Endothelial cell of umbilical vein (primary cell): ENCODE measurements at regions of chr6 and their contacts with region 1.

Region 1: GRCh38 chr6:722077-722524 is 29.2 kb upstream of the EXOC2 start:
- DNase-seq: peak; percentile 77
- H3K4me3 ChIP-seq: no peak overlapping the region
- H3K27ac ChIP-seq: no peak overlapping the region
- H3K4me1 ChIP-seq: no peaks in the 10 kb centered on the region
- H3K27me3 ChIP-seq: no peaks in the 10 kb centered on the region
- CTCF ChIP-seq: peak; percentile 89 to 94
- POLR2A ChIP-seq: no peak

Region 2: DNA sequence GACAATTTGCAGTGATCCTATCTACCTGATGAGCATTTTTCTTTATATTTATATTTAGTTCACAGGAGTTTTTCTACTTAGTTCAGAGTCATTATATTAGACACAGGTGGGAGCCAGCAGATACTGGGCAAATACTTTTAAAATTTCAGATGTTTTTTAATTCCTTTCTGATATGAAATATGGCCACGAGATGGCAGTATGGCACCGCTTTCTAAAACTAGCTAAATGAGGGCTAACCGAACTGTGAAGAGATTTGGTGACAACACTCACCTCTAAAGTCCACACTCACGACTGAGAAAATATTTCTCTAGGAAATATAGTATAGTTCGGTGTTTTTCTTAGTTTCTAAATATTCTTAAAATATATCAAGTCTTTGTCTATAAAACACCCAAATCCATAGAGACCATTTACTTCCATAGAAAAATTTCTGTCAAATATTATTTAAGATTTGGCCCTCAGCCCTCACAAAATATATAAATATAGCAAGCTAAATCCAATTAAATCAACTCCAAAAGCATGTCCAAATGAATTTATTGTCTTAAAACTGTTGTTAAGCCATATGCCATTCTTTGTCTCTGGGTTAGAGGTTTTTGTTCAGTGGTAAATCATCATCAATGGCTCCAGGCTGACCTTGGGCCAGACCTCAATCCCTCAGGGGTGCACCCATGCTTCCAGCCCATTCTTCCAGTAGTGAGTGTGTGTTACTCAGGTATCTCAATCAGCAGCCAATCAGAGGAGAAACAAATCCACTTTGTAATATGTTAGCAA is 128.8 kb before region 1 on chr6:
- CTCF ChIA-PET with region 1: interaction called, 66 read pairs
- POLR2A ChIA-PET with region 1: no interaction called
- dilution Hi-C with region 1: no loop called
- intact Hi-C with region 1: loop called (anchors 1 kb)
- DNase-seq: peak; percentile 67
- H3K4me3 ChIP-seq: no peak overlapping the region
- H3K27ac ChIP-seq: no peak overlapping the region
- H3K4me1 ChIP-seq: no peaks in the 10 kb centered on the region
- H3K27me3 ChIP-seq: no peaks in the 10 kb centered on the region
- CTCF ChIP-seq: peak; percentile 15 to 27
- POLR2A ChIP-seq: no peak

Region 3: DNA sequence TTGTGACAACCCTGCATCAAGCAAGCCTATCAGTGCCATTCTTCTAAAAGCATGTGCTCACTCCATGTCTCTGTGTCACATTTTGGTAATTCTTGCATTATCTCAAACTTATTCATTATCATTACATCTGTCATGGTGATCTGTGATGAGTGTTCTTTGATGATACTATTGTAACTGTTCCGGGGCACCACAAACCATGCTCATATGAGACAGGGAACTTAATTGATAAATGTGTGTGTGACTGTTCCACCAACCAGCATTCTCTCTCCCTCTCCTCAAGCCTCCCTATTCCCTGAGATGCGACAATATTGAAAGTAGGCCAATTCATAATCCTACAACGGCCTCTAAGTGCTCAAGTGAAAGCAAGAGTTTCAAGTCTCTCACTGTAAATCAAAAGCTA is 69.2 kb before region 1 on chr6:
- CTCF ChIA-PET with region 1: interaction called, 11 read pairs
- POLR2A ChIA-PET with region 1: no interaction called
- dilution Hi-C with region 1: no loop called
- intact Hi-C with region 1: no loop called
- DNase-seq: no peak
- H3K4me3 ChIP-seq: no peak overlapping the region
- H3K27ac ChIP-seq: no peak overlapping the region
- H3K4me1 ChIP-seq: no peaks in the 10 kb centered on the region
- H3K27me3 ChIP-seq: no peaks in the 10 kb centered on the region
- CTCF ChIP-seq: no peak
- POLR2A ChIP-seq: no peak

Region 4: GRCh38 chr6:701700-702479 is 20.2 kb before region 1 on chr6:
- CTCF ChIA-PET with region 1: interaction called, 22 read pairs
- POLR2A ChIA-PET with region 1: no interaction called
- dilution Hi-C with region 1: no loop called
- intact Hi-C with region 1: loop called (anchors 2 kb)
- DNase-seq: no peak
- H3K4me3 ChIP-seq: no peak overlapping the region
- H3K27ac ChIP-seq: no peak overlapping the region
- H3K4me1 ChIP-seq: peaks cover 44% of the 10 kb centered on the region
- H3K27me3 ChIP-seq: no peaks in the 10 kb centered on the region
- CTCF ChIP-seq: no peak
- POLR2A ChIP-seq: no peak

Region 5: DNA sequence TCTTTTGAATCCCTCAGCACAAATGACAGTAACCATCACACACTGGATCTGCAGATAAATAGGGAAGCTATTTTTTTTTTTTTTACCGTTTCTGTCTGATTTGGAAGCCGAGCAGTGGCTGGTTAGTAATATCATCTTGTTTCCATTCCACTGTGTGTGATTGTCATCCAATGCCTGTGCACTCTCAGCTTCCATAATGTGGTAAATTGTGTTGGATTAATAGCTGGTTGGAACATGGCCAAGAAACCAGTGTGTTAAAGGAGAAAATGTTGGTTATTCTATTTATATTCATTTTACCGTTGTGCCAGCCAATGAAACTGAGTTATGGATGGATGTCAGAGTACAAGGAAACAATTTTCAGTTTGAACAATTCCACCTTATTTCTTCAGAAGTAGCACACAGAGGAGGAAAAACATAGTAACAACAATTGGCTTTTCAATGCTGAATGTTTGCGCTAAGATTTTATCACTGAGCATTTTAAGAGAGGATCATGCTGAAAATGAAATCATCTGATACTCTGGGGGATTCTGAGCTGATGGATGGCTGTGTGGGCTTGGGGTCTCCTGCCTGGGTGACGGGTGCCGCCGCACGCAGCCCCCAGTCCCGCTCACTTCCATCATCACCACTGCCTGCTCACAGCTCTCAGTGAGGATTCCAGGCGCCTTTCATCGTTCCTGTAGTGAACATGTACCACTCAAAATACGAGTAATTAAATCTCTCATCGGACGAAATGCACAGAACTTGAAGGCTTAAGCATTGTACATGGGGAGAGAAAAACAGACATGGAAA is 11.5 kb after region 1 on chr6:
- CTCF ChIA-PET with region 1: interaction called, 27 read pairs
- POLR2A ChIA-PET with region 1: no interaction called
- dilution Hi-C with region 1: no loop called
- intact Hi-C with region 1: no loop called
- DNase-seq: no peak
- H3K4me3 ChIP-seq: no peak overlapping the region
- H3K27ac ChIP-seq: no peak overlapping the region
- H3K4me1 ChIP-seq: no peaks in the 10 kb centered on the region
- H3K27me3 ChIP-seq: peaks cover 3 to 7% of the 10 kb centered on the region in 2 experiments
- CTCF ChIP-seq: no peak
- POLR2A ChIP-seq: no peak

Region 6: GRCh38 chr6:1309366-1309765 is 587.3 kb after region 1 on chr6:
- CTCF ChIA-PET with region 1: no interaction called
- POLR2A ChIA-PET with region 1: no interaction called
- dilution Hi-C with region 1: no loop called
- intact Hi-C with region 1: no loop called
- DNase-seq: no peak
- H3K4me3 ChIP-seq: no peak overlapping the region
- H3K27ac ChIP-seq: no peak overlapping the region
- H3K4me1 ChIP-seq: peaks cover 5% of the 10 kb centered on the region
- H3K27me3 ChIP-seq: peaks cover 33 to 56% of the 10 kb centered on the region in 2 experiments
- CTCF ChIP-seq: no peak
- POLR2A ChIP-seq: no peak

Region 7: DNA sequence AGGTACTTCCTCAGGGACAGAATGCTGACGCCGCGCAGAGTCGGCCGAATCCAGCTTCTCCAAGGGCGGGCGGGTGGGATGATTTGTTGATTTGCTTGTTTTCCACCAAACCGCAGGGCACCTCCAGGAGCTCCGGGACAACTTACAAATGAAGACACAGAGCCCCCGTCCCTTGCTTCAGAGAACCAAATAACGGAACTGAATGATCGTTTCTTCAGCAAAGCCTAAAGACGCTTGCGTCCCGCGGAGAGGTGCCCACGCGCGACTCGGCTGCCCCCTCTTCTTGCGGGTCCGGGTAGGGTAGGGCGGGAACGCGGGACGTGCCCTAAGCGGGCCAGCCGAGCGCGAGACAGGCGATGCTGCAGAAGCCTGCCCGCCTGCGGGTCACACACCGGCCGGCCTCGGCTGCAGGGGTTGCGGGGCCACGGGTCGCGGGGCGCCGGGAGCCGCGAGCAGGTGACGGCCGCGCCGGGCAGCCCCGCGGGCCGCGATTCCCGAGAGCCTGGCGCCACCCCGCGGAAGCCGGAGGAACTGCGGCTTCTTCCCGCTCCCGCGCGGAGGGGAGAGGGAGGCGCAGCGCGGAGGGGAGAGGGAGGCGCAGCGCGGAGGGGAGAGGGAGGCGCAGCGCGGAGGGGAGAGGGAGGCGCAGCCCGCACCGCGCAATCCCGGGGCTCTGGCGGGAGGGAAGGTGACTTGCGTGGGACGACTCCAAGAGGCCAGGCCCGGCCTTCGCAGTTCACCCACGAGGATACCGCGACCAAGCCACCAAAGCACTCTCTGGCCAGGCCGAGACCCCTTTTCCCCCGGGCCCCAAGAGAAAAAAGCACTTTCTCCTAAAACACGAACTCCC is 659.6 kb after region 1 on chr6:
- CTCF ChIA-PET with region 1: interaction called, 14 read pairs
- POLR2A ChIA-PET with region 1: no interaction called
- dilution Hi-C with region 1: no loop called
- intact Hi-C with region 1: loop called (anchors 2 kb)
- DNase-seq: peak; percentile 3
- H3K4me3 ChIP-seq: no peak overlapping the region
- H3K27ac ChIP-seq: no peak overlapping the region
- H3K4me1 ChIP-seq: no peaks in the 10 kb centered on the region
- H3K27me3 ChIP-seq: peaks cover 88 to 98% of the 10 kb centered on the region in 2 experiments
- CTCF ChIP-seq: peak; percentile 73 to 74
- POLR2A ChIP-seq: no peak